Activated naive CD4-positive, alpha-beta T cell treated with anti-CD3 and anti-CD28 coated beads for 36 hours (primary cell): ENCODE measurements at regions of chr9 and their contacts with region 1.

Region 1: GRCh38 chr9:6681147-6681956 is 35.8 kb upstream of the GLDC start:
- DNase-seq: peak; percentile 94
- H3K4me3 Mint-ChIP-seq: peak overlapping the region; percentile 95
- H3K27ac Mint-ChIP-seq: peak overlapping the region; percentile 99
- H3K4me1 Mint-ChIP-seq: peaks cover 18% of the 10 kb centered on the region
- H3K27me3 Mint-ChIP-seq: no peaks in the 10 kb centered on the region

Region 2: GRCh38 chr9:6068983-6069382 is 612.4 kb before region 1 on chr9:
- CTCF ChIA-PET with region 1: no interaction called
- intact Hi-C with region 1: loop called (anchors 2 kb)
- DNase-seq: peak; percentile 38
- H3K4me3 Mint-ChIP-seq: peak overlapping the region; percentile 39
- H3K27ac Mint-ChIP-seq: peak overlapping the region; percentile 81
- H3K4me1 Mint-ChIP-seq: peaks cover 18% of the 10 kb centered on the region
- H3K27me3 Mint-ChIP-seq: no peaks in the 10 kb centered on the region

Region 3: DNA sequence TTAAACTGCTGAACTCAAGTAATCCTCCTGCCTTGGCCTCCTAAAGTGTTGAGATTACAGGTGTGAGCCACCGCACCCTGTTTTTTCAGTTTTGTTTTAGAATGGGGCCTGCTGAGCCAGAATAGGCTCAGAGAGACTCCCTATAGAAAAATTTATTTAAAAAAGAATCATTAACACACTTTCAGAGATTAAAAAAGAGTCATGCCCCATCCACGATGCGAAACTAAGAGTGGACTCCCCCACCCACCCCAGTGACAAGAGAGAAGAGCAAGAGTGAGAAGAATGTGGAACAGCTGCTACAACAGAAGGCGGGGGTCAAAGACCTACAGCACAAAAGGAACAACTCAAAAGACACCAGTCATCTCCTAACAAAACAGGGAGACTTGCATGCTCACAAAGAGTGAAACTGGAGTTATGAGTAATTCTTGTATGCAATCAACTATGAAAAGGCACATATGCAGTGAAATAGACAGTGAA is 83.1 kb before region 1 on chr9:
- CTCF ChIA-PET with region 1: no interaction called
- intact Hi-C with region 1: loop called (anchors 1 kb)
- DNase-seq: peak; percentile 64
- H3K4me3 Mint-ChIP-seq: no peak overlapping the region
- H3K27ac Mint-ChIP-seq: peak overlapping the region; percentile 54
- H3K4me1 Mint-ChIP-seq: peaks cover 7% of the 10 kb centered on the region
- H3K27me3 Mint-ChIP-seq: no peaks in the 10 kb centered on the region

Region 4: GRCh38 chr9:6703898-6704639 is 22.7 kb after region 1 on chr9:
- CTCF ChIA-PET with region 1: no interaction called
- intact Hi-C with region 1: loop called (anchors 1 kb)
- DNase-seq: peak; percentile 75
- H3K4me3 Mint-ChIP-seq: peak overlapping the region; percentile 86
- H3K27ac Mint-ChIP-seq: peak overlapping the region; percentile 83
- H3K4me1 Mint-ChIP-seq: peaks cover 7% of the 10 kb centered on the region
- H3K27me3 Mint-ChIP-seq: no peaks in the 10 kb centered on the region

Region 5: GRCh38 chr9:8115570-8115969 is 1434.2 kb after region 1 on chr9:
- CTCF ChIA-PET with region 1: no interaction called
- intact Hi-C with region 1: no loop called
- DNase-seq: no peak
- H3K4me3 Mint-ChIP-seq: no peak overlapping the region
- H3K27ac Mint-ChIP-seq: no peak overlapping the region
- H3K4me1 Mint-ChIP-seq: peaks cover 9% of the 10 kb centered on the region
- H3K27me3 Mint-ChIP-seq: no peaks in the 10 kb centered on the region